HAP-1 (cell line): ENCODE measurements at regions of chr3 and their contacts with region 1.

Region 1: GRCh38 chr3:181683563-181683962 is 28.2 kb upstream of the SOX2 start:
- DNase-seq: no peak
- H3K4me3 ChIP-seq: no peak overlapping the region
- H3K4me1 ChIP-seq: peaks cover 52% of the 10 kb centered on the region
- H3K27me3 ChIP-seq: no peaks in the 10 kb centered on the region

Region 2: GRCh38 chr3:181487236-181487978 is 196.2 kb before region 1 on chr3:
- in situ Hi-C with region 1: no loop called
- DNase-seq: no peak
- H3K4me3 ChIP-seq: no peak overlapping the region
- H3K4me1 ChIP-seq: no peaks in the 10 kb centered on the region
- H3K27me3 ChIP-seq: peaks cover 4% of the 10 kb centered on the region

Region 3: GRCh38 chr3:181610083-181610972 is 73.2 kb before region 1 on chr3:
- in situ Hi-C with region 1: loop called (anchors 10 kb)
- DNase-seq: peak; percentile 42 to 92
- H3K4me3 ChIP-seq: peak overlapping the region; percentile 23
- H3K4me1 ChIP-seq: peaks cover 44% of the 10 kb centered on the region
- H3K27me3 ChIP-seq: no peaks in the 10 kb centered on the region

Region 4: GRCh38 chr3:183006396-183007002 is 1322.9 kb after region 1 on chr3:
- in situ Hi-C with region 1: no loop called
- DNase-seq: no peak
- H3K4me3 ChIP-seq: no peak overlapping the region
- H3K4me1 ChIP-seq: peaks cover 7% of the 10 kb centered on the region
- H3K27me3 ChIP-seq: no peaks in the 10 kb centered on the region